ENCODE measurements at regions of chr10 and their contacts with region 1.

Region 1: DNA sequence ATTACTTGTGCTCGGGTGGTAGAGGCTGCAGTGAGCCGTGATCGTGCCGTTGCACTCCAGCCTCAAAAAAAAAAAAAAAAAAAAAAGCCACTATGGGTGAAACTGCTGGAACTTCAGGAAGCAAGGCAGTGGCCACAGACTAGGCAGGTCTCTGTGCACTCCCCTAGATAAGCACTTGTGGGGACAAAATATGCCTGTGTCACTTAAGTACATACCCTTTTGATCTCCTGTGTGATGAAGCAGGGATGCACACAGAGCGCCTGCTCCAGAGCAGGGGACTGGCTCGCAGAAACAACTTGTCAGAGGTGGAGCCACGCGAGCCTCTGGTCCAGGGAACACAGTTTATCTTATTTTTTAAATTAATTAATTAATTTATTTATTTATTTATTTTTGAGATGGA is 42.9 kb upstream of the PSAP start:
- DNase-seq: no peak
- H3K4me3 ChIP-seq: no peak overlapping the region
- H3K27ac ChIP-seq: no peak overlapping the region
- H3K4me1 ChIP-seq: peaks cover 0 to 3% of the 10 kb centered on the region in 2 experiments; a peak in 1 of 4 replicates
- H3K27me3 ChIP-seq: no peaks in the 10 kb centered on the region
- CTCF ChIP-seq: no peak
- EP300 ChIP-seq: no peak
- RAD21 ChIP-seq: no peak

Region 2: DNA sequence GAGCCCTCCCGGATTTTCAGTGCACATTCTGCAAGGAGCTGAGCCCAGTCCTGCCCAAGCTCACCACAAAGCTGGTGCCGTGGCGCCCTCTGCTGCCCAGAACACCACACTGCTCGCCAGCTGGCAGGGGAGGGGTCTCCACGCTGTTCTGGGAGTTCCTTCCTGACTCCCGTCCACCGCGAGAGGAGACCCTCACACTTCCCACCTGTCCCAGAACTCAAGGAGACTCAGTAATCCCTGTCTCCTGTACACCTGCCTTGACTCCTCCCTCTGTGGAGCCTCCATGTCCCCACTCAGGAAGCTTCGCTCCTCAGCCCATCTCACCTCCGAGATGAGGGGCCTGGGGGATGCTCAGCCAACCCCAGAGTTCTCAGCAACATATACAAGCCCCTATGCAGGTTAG is 185.6 kb before region 1 on chr10:
- CTCF ChIA-PET with region 1: interaction called, 24 read pairs
- POLR2A ChIA-PET with region 1: no interaction called
- DNase-seq: peak; percentile 90
- H3K4me3 ChIP-seq: peak overlapping the region in 1 of 2 experiments; percentile 51; a peak in 1 of 4 replicates
- H3K27ac ChIP-seq: no peak overlapping the region
- H3K4me1 ChIP-seq: peaks cover 0 to 13% of the 10 kb centered on the region in 2 experiments; a peak in 1 of 4 replicates
- H3K27me3 ChIP-seq: peaks cover 3% of the 10 kb centered on the region; the same call in 1 of the 2 replicates
- CTCF ChIP-seq: peak; percentile 77
- EP300 ChIP-seq: no peak
- RAD21 ChIP-seq: peak; percentile 90

Region 3: GRCh38 chr10:71771821-71772617 is 121.9 kb before region 1 on chr10:
- CTCF ChIA-PET with region 1: interaction called, 13 read pairs
- POLR2A ChIA-PET with region 1: no interaction called
- DNase-seq: no peak
- H3K4me3 ChIP-seq: peak overlapping the region in 1 of 2 experiments; percentile 68; a peak in 1 of 4 replicates
- H3K27ac ChIP-seq: no peak overlapping the region; a peak in 1 of 4 replicates
- H3K4me1 ChIP-seq: peaks cover 22 to 26% of the 10 kb centered on the region in 2 experiments; a peak in 3 of 4 replicates
- H3K27me3 ChIP-seq: no peaks in the 10 kb centered on the region
- CTCF ChIP-seq: no peak
- EP300 ChIP-seq: no peak
- RAD21 ChIP-seq: no peak

Region 4: GRCh38 chr10:71845410-71846405 is 48.2 kb before region 1 on chr10:
- CTCF ChIA-PET with region 1: interaction called, 12 read pairs
- POLR2A ChIA-PET with region 1: no interaction called
- DNase-seq: no peak
- H3K4me3 ChIP-seq: no peak overlapping the region
- H3K27ac ChIP-seq: no peak overlapping the region; a peak in 1 of 4 replicates
- H3K4me1 ChIP-seq: peaks cover 24 to 37% of the 10 kb centered on the region in 2 experiments
- H3K27me3 ChIP-seq: no peaks in the 10 kb centered on the region
- CTCF ChIP-seq: no peak
- EP300 ChIP-seq: no peak
- RAD21 ChIP-seq: no peak

Region 5: GRCh38 chr10:71921324-71922027 is 27.6 kb after region 1 on chr10:
- CTCF ChIA-PET with region 1: interaction called, 31 read pairs
- POLR2A ChIA-PET with region 1: no interaction called
- DNase-seq: peak; percentile 80
- H3K4me3 ChIP-seq: no peak overlapping the region
- H3K27ac ChIP-seq: peak overlapping the region in 1 of 2 experiments; percentile 50; a peak in 2 of 4 replicates
- H3K4me1 ChIP-seq: peaks cover 5 to 17% of the 10 kb centered on the region in 2 experiments; a peak in 3 of 4 replicates
- H3K27me3 ChIP-seq: no peaks in the 10 kb centered on the region; the same call in 1 of the 2 replicates
- CTCF ChIP-seq: no peak
- EP300 ChIP-seq: no peak
- RAD21 ChIP-seq: no peak

Region 6: GRCh38 chr10:72013202-72013945 is 119.5 kb after region 1 on chr10:
- CTCF ChIA-PET with region 1: interaction called, 15 read pairs
- POLR2A ChIA-PET with region 1: no interaction called
- DNase-seq: peak; percentile 88
- H3K4me3 ChIP-seq: no peak overlapping the region
- H3K27ac ChIP-seq: peak overlapping the region in 1 of 2 experiments; percentile 90; a peak in 3 of 4 replicates
- H3K4me1 ChIP-seq: peaks cover 13 to 54% of the 10 kb centered on the region in 2 experiments
- H3K27me3 ChIP-seq: no peaks in the 10 kb centered on the region
- CTCF ChIP-seq: no peak
- EP300 ChIP-seq: peak in 1 of 2 experiments; percentile 38; a peak in 1 of 4 replicates
- RAD21 ChIP-seq: peak; percentile 20; the same call in 1 of the 2 replicates

Region 7: DNA sequence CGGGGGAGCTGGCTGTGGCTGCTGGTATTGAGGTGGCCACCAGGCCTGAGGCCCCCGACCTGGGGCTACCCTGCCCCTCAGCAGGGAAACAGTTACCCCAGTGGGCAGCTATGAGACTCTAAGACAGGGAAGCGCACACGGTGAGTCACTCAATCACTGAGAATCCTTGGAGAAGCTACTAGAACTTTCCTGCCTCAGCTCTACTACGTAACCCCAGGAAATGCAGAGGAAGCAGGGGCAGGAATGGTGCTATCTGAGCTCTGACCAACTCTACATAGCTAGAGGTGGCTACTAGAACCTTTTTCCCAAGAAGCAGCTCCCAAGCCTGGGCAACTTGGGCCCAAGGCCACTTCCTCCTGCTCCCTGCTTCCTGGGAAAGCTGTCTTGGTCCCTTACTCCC is 449.0 kb after region 1 on chr10:
- CTCF ChIA-PET with region 1: interaction called, 10 read pairs
- POLR2A ChIA-PET with region 1: no interaction called
- DNase-seq: no peak
- H3K4me3 ChIP-seq: no peak overlapping the region
- H3K27ac ChIP-seq: no peak overlapping the region
- H3K4me1 ChIP-seq: no peaks in the 10 kb centered on the region
- H3K27me3 ChIP-seq: no peaks in the 10 kb centered on the region
- CTCF ChIP-seq: no peak
- EP300 ChIP-seq: no peak
- RAD21 ChIP-seq: no peak